Breast epithelium (tissue), 4 donors: ENCODE measurements at regions of chr3 and their contacts with region 1.

Region 1: GRCh38 chr3:151052756-151053155 is 32.7 kb upstream of the MED12L start:
- DNase-seq: no peak
- H3K4me3 ChIP-seq: no peak overlapping the region
- H3K27ac ChIP-seq: no peak overlapping the region
- H3K4me1 ChIP-seq: no peaks in the 10 kb centered on the region
- H3K27me3 ChIP-seq: no peaks in the 10 kb centered on the region
- CTCF ChIP-seq: no peak
- POLR2A ChIP-seq: no peak

Region 2: GRCh38 chr3:151086484-151087456 is 34.0 kb after region 1 on chr3:
- intact Hi-C with region 1: loop called (anchors 1 kb)
- DNase-seq: peak; percentile 51 to 71
- H3K4me3 ChIP-seq: peak overlapping the region; percentile 57 to 74 (median 69)
- H3K27ac ChIP-seq: no peak overlapping the region
- H3K4me1 ChIP-seq: no peaks in the 10 kb centered on the region
- H3K27me3 ChIP-seq: peaks cover 0 to 6% of the 10 kb centered on the region in 2 donors
- CTCF ChIP-seq: peak in 1 of 3 donors; percentile 20
- POLR2A ChIP-seq: no peak